ENCODE measurements at regions of chr16 and their contacts with region 1.

Region 1: GRCh38 chr16:74998481-74999218 is at the start of gene ZNRF1:
- DNase-seq: peak; percentile 91 to 95 (median 94)
- H3K4me3 ChIP-seq: peak within 1 kb of the TSS; percentile 86 to 100 (median 93)
- H3K27ac ChIP-seq: peak within 1 kb of the TSS; percentile 57 to 85
- H3K4me1 ChIP-seq: peaks cover 19 to 53% (median 32%) of the 10 kb centered on the region in 4 experiments
- H3K27me3 ChIP-seq: no peaks in the 10 kb centered on the region

Region 2: DNA sequence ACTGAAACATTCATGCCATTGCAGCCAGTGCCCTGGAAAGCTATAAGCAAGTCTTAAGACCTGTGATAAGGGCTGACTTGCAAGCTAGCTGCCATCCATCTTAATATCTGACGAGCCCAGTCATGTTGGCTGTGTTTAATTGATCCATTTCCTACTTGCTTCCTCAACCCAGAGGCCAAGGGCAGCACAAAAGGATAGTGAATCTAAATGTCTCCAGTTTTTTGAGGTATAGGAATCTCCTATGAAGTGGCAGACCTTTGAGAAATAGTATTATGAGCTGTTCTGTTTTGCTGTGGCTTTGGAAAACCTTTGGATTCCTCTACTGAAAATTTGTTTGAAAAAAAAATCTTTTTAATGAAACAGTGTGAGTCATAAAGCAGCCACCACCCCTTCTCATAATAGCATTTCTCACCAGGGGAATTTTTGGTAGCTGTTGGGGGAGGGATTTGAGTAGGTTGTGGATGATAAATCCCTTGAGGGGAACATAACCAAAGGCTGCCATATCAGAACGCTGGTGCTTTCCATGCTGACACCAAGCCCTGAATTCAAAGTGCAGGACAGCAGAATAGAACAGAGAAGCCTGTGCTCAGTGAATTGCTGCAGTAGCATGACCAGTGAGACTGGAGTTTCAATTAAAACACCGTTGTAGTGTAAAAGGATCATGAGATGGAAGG is 13.1 kb after region 1 on chr16:
- CTCF ChIA-PET with region 1: interaction called, 16 read pairs
- POLR2A ChIA-PET with region 1: no interaction called
- DNase-seq: peak; percentile 63 to 92 (median 92)
- H3K4me3 ChIP-seq: peak overlapping the region in 3 of 7 experiments; percentile 6 to 17 (median 11)
- H3K27ac ChIP-seq: peak overlapping the region; percentile 46 to 71
- H3K4me1 ChIP-seq: peaks cover 16 to 49% (median 40%) of the 10 kb centered on the region in 4 experiments
- H3K27me3 ChIP-seq: no peaks in the 10 kb centered on the region

Region 3: GRCh38 chr16:75024594-75024993 is 25.9 kb after region 1 on chr16:
- CTCF ChIA-PET with region 1: no interaction called
- POLR2A ChIA-PET with region 1: no interaction called
- DNase-seq: peak in 2 of 3 donors; percentile 84 to 87
- H3K4me3 ChIP-seq: peak overlapping the region in 1 of 7 experiments; percentile 9
- H3K27ac ChIP-seq: no peak overlapping the region
- H3K4me1 ChIP-seq: peaks cover 13 to 42% (median 33%) of the 10 kb centered on the region in 4 experiments
- H3K27me3 ChIP-seq: no peaks in the 10 kb centered on the region

Region 4: DNA sequence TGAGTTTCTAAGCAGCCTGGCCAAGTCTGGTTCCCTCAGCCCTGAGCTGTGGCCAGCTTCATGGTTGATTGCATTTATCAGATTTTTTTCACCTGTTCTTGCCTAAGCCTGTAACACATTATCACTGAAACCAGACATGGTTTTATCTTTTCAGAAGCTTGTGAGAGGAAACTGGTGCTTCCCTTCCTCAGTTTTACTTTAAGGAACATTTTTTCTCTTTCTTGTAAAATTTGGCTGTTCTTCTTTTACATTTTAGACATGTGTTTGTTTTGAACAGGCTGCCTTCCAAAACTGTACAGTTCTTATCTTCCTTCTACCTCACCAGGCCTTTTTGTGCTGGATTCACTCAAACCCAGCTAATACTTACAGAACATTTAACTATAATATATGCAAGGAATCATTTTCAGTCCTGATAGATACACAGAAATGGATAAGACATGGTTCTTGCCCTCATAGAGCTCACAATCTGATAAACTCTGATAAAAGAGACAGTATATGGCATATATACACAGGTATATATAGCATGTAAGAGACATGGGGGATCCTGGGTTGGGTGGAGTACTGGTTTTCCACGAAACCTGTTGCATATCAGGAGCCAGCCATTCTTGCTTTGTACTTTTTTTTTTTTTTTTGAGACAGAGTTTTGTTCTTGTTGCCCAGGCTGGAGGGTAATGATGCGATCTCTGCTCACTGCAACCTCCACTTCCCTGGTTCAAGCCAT is 44.7 kb after region 1 on chr16:
- CTCF ChIA-PET with region 1: interaction called, 13 read pairs
- POLR2A ChIA-PET with region 1: interaction called, 10 read pairs
- DNase-seq: peak; percentile 96 to 100 (median 98)
- H3K4me3 ChIP-seq: peak overlapping the region in 3 of 7 experiments; percentile 49 to 63 (median 56)
- H3K27ac ChIP-seq: peak overlapping the region; percentile 90 to 95
- H3K4me1 ChIP-seq: peaks cover 26 to 85% (median 73%) of the 10 kb centered on the region in 4 experiments
- H3K27me3 ChIP-seq: no peaks in the 10 kb centered on the region

Region 5: DNA sequence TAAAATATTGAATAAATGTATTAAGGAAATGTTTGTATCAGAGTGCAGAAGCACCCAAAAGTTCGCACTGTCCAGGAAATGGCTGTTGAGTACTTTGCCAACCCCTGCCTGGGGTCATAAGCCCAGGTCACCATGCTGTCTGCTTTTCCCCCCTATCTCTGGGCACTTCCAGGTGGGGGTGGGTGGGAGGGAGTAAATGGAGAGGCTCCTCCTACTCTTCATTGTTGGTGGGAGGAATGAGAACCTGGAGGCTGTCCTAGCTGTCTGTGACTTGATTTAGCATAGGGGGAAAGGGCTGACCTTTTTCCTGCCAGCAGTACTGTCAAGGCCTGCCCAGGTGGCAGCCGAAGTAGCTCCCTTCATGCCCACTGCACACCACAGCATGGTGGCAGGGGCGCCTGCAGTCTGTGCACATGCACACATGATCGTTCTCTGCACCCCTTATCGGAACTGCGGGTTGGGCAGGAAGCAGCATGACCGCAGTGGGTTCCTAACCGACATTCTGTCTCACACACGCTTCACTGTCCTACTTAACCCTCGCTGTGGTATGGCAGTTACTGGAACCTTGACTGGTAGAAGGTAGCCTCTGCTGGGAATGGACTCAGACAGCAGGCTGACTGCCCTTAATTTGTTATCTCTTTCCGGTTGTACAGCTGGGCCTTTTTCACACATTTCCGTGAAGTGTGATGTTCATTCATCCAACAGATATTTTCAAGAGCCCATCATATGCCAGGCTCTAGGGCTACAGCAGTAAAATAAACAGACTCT is 76.5 kb after region 1 on chr16:
- CTCF ChIA-PET with region 1: interaction called, 17 read pairs
- POLR2A ChIA-PET with region 1: interaction called, 6 read pairs
- DNase-seq: peak; percentile 97 to 100 (median 99)
- H3K4me3 ChIP-seq: peak overlapping the region in 4 of 7 experiments; percentile 2 to 48 (median 22)
- H3K27ac ChIP-seq: peak overlapping the region; percentile 61 to 80
- H3K4me1 ChIP-seq: peaks cover 20 to 97% (median 89%) of the 10 kb centered on the region in 4 experiments
- H3K27me3 ChIP-seq: no peaks in the 10 kb centered on the region

Region 6: DNA sequence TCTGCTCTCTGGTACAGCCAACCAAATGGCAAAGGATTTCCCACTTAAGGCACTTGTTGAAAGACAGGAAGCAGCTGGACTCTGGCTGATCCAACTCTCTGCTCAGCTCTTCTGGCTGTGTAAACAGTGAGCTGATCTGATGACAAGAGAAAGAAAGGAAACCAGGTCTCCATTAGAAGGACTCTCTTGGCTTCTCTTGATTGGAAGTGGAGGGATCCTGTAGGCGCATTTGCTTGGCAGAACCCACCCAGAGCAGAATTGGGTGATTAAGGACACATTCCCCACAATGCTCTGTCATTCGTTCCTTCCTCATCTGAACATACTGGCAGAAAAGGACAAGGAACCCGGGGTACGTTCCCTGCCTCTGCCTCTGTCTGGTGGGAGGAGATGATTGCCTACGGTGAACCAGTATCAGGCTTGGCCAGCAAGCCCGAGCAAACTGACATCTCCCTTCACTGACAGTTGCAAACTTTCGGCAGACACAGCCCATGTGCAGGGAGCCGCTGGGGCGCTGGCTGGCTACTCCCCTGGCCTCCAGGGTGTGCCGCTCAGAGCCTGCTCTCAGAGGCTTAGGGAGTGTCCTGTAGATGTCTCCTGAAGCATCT is 88.8 kb after region 1 on chr16:
- CTCF ChIA-PET with region 1: interaction called, 16 read pairs
- POLR2A ChIA-PET with region 1: interaction called, 3 read pairs
- DNase-seq: peak in 2 of 3 donors; percentile 79 to 87
- H3K4me3 ChIP-seq: peak overlapping the region in 4 of 7 experiments; percentile 17 to 58 (median 34)
- H3K27ac ChIP-seq: peak overlapping the region; percentile 11 to 73
- H3K4me1 ChIP-seq: peaks cover 16 to 91% (median 66%) of the 10 kb centered on the region in 4 experiments
- H3K27me3 ChIP-seq: no peaks in the 10 kb centered on the region

Region 7: GRCh38 chr16:75099756-75100602 is 101.3 kb after region 1 on chr16:
- CTCF ChIA-PET with region 1: interaction called, 12 read pairs
- POLR2A ChIA-PET with region 1: interaction called, 3 read pairs
- DNase-seq: peak in 2 of 3 donors; percentile 60 to 62
- H3K4me3 ChIP-seq: peak overlapping the region in 4 of 7 experiments; percentile 8 to 30 (median 22)
- H3K27ac ChIP-seq: peak overlapping the region in 1 of 2 experiments; percentile 15
- H3K4me1 ChIP-seq: peaks cover 5 to 90% (median 79%) of the 10 kb centered on the region in 4 experiments
- H3K27me3 ChIP-seq: no peaks in the 10 kb centered on the region